Left cardiac atrium (tissue), 4 donors: ENCODE measurements at regions of chr2 and their contacts with region 1.

Region 1: DNA sequence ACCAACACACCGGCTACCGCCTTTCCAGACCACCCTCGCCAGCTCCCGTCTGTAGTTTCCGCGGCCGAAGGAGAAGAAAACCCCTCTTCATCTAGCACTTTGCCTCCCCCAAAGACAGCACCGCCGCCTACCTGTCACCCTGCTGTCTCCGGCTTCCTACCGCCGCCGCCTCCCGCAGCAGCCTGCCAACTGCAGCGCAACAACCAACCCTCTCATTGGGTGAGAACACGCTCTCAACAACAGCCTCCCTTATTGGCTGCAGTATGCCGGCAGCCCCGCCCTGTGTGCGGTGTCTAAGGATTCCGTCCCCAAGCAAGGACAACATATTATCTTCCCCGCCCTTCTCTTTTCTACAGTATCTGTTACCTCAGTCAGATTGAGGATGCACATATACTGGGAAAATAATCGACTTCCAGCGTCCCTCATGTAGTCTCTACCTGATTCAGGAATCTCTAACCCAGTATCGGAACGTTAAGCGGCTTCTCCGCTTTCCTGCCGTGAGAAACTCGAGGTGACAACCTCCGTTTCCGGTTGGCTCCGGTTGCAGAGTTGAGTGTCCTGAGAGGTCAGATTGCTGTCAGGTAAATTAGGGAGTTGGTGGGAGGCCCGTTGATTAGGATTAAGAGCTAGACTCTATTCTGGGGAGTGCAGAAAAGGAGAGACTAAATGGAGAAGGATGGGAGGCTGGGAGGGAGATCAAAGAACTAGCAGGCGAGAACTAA is at the starts of genes HYCC2 and NDUFB3:
- DNase-seq: peak; percentile 90
- ATAC-seq: peak; percentile 99 to 100
- total RNA-seq, gene HYCC2: 15.2 to 17.9 TPM
- total RNA-seq, gene NDUFB3: 325 to 342 TPM

Region 2: GRCh38 chr2:200901459-200902072 is 170.1 kb before region 1 on chr2:
- intact Hi-C with region 1: loop called (anchors 2 to 10 kb)
- DNase-seq: peak; percentile 56
- ATAC-seq: peak; percentile 84 to 85

Region 3: GRCh38 chr2:200963124-200963917 is 108.3 kb before region 1 on chr2 and contains the start of gene ORC2:
- intact Hi-C with region 1: loop called in 1 of 2 experiments (anchors 5 kb)
- DNase-seq: peak; percentile 95
- ATAC-seq: peak; percentile 99 to 100
- total RNA-seq, gene ORC2: 21.1 to 27.1 TPM

Region 4: GRCh38 chr2:201108341-201108740 is 36.7 kb after region 1 on chr2:
- intact Hi-C with region 1: no loop called
- DNase-seq: no peak
- ATAC-seq: no peak

Region 5: DNA sequence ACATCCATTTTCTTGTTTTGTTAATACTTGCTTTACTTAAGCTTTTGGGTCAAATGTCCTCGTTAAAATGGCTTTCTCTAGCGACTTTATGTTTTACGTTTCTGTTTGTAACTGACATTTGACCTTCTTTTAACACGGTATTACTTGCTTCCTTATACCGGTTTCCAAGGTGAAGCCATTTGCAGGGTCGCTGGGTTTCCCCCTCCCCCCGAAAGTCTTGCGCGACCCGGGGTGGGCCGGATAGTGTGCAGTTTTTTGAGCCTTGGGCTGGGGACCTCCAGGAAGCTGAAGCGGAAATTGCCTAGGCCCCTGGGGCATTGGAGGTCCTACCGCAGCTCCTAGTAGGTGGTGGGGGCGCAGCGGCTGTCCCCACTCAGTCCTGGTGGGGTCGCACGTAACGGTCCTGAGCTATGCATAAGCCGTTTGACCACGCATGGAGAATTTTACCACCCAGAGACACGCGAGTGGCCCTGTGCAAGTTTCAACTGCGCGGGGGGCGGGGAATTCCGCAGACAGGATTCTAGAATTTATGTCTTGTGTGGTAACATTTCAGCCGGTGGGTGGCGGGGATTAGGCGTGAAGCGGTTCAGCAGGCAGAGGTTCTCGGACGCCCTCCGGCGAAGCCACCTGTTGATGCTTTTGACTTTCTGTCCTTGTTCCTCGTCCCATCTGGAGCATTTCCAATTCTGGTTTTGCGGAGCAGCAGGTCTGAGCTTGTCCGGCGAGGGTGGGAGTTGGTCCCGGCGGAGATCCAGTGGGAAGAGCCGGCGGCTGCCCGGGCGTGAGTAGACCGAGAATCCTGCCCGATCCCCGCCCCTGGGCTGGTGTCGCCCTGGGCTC is 46.7 kb after region 1 on chr2:
- intact Hi-C with region 1: loop called in 1 of 2 experiments (anchors 5 kb)
- DNase-seq: peak; percentile 92
- ATAC-seq: peak; percentile 46 to 53

Region 6: GRCh38 chr2:201171259-201171814 is 99.7 kb after region 1 on chr2:
- intact Hi-C with region 1: loop called (anchors 5 to 10 kb)
- DNase-seq: no peak
- ATAC-seq: peak in 1 of 2 donors; percentile 13

Region 7: GRCh38 chr2:201194097-201194496 is 122.5 kb after region 1 on chr2:
- intact Hi-C with region 1: no loop called
- DNase-seq: no peak
- ATAC-seq: no peak

Region 8: GRCh38 chr2:201285499-201285898 is 213.9 kb after region 1 on chr2:
- intact Hi-C with region 1: no loop called
- DNase-seq: no peak
- ATAC-seq: no peak